Right ventricle myocardium inferior (tissue), 1 donor: ENCODE measurements at regions of chr21 and their contacts with region 1.

Region 1: GRCh38 chr21:44958471-44959191 is 18.8 kb downstream of the SLX9 start:
- DNase-seq: peak; percentile 90
- ATAC-seq: peak; percentile 84

Region 2: GRCh38 chr21:44994695-44995342 is 36.2 kb after region 1 on chr21:
- intact Hi-C with region 1: loop called (anchors 5 kb)
- DNase-seq: peak; percentile 60
- ATAC-seq: peak; percentile 23

Region 3: GRCh38 chr21:45011911-45012660 is 53.5 kb after region 1 on chr21:
- intact Hi-C with region 1: loop called (anchors 10 kb)
- DNase-seq: peak; percentile 20
- ATAC-seq: peak; percentile 33

Region 4: GRCh38 chr21:45607021-45607908 is 648.6 kb after region 1 on chr21:
- intact Hi-C with region 1: no loop called
- DNase-seq: no peak
- ATAC-seq: no peak